GM13976 (cell line): ENCODE measurements at regions of chrX and their contacts with region 1.

Region 1: GRCh38 chrX:38166478-38167083 is 54.1 kb downstream of the SRPX start:
- DNase-seq: peak; percentile 20
- CTCF ChIP-seq: peak; percentile 5

Region 2: DNA sequence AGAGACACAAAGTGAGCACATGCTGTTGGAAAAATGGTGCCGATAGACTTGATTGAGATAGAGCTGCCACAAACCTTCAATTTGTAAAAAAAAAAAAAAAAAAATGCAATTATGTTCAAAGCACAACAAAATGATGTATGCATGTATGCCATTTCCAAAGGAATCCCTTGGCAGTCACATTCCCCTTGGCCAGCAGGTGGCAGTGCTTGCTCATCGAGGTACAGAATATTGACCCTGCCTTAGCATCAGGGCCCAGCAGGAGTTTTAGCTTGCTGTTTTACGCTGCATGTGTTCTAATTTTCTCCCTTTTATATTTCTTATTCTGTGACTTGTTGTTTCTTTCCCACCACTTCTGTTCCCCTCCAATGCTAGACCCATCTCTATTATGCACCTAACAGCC is 421.2 kb before region 1 on chrX:
- in situ Hi-C with region 1: loop called (anchors 25 kb)
- DNase-seq: peak; percentile 58
- CTCF ChIP-seq: peak; percentile 86

Region 3: GRCh38 chrX:38052096-38052495 is 114.5 kb before region 1 on chrX:
- in situ Hi-C with region 1: loop called (anchors 25 kb)
- DNase-seq: no peak
- CTCF ChIP-seq: no peak

Region 4: GRCh38 chrX:38694394-38694793 is 527.8 kb after region 1 on chrX:
- in situ Hi-C with region 1: no loop called
- DNase-seq: no peak
- CTCF ChIP-seq: no peak